Ascending aorta (tissue), 2 donors: ENCODE measurements at regions of chr6 and their contacts with region 1.

Region 1: GRCh38 chr6:20056350-20056992 is 155.8 kb downstream of the MBOAT1 start:
- DNase-seq: no peak
- H3K4me3 ChIP-seq: no peak overlapping the region
- H3K27ac ChIP-seq: no peak overlapping the region
- H3K4me1 ChIP-seq: no peaks in the 10 kb centered on the region
- H3K27me3 ChIP-seq: no peaks in the 10 kb centered on the region
- CTCF ChIP-seq: peak in 2 of 3 experiments; percentile 43 to 54

Region 2: GRCh38 chr6:18527836-18528743 is 1528.4 kb before region 1 on chr6:
- intact Hi-C with region 1: loop called (anchors 10 kb)
- DNase-seq: no peak
- H3K4me3 ChIP-seq: no peak overlapping the region
- H3K27ac ChIP-seq: no peak overlapping the region
- H3K4me1 ChIP-seq: no peaks in the 10 kb centered on the region
- H3K27me3 ChIP-seq: no peaks in the 10 kb centered on the region
- CTCF ChIP-seq: peak in 2 of 3 experiments; percentile 6 to 47

Region 3: DNA sequence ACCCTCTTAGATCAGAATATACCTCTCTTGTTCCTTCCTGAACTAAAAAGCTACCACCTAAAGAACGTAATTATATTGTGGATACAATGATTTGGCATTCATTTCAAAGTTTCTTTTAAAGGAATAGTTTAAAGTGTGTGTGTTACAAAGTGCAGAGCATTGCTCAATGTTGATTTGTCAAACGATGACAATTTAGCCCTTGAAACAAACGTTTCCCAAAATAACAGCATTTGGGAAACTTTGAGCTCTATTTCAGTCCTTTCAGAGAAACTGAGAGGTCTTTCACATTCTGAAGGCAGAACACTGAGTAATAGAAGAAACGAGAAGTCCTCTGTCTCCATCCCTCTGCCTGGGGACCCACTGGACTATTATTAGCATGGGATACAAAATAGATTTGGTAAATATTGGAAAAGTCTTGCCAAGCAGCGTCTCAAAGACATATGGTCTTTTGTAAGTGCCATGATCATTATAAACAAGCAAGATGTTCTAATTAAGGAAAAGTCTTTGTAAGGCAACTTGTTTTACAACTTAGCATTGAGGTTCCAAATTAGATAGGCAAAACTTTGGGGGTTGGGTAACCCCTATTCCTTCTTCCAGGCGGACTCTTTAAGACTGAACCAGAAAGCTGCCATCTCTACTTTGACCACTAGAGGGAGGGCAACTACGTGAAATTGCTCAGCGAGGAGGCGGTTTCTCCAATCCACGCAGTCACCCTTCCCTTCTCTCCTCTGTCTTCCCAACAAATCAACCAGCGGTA is 1460.5 kb before region 1 on chr6:
- intact Hi-C with region 1: loop called (anchors 2 kb)
- DNase-seq: peak in 1 of 2 donors; percentile 79
- H3K4me3 ChIP-seq: peak overlapping the region in 1 of 2 donors; percentile 51
- H3K27ac ChIP-seq: peak overlapping the region; percentile 56 to 65
- H3K4me1 ChIP-seq: no peaks in the 10 kb centered on the region
- H3K27me3 ChIP-seq: no peaks in the 10 kb centered on the region
- CTCF ChIP-seq: peak; percentile 72 to 93 (median 89)

Region 4: DNA sequence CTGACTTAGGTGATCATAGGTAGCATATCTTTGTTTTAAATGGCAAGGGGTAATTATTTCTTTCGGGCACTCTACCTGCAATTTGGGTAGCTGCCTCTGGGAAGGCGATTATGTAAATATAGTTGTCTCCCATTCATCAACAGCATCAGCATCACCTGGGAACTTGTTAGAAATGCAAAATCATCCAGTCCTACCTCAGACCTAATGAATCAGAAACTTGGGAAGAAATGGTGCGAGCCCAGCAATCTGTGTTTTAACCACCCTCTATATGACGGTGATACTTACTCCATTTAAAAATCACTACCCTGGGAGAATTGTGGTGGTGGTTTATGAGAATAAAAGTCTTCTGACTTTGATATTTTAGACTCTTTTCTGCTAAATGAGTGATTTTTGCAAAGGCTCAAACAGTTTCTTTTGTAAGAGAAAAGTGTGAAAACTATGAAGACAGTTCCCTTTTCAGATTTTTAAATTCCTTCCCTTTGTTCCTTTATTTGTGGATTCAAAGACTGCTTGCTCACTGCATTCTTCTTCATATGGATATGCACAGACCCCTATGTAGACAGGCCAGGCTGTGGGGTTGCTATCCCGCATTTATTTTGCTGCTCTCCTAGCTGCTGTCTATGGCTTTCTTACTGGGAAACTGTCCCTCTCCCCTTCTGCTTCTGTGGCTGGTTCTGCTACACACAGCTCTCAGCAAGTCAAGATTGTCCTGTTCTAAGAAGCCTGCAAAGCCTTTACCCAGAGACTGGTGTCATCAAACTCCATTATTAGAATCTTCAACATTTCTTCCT is 1304.0 kb before region 1 on chr6:
- intact Hi-C with region 1: loop called (anchors 2 kb)
- DNase-seq: no peak
- H3K4me3 ChIP-seq: no peak overlapping the region
- H3K27ac ChIP-seq: no peak overlapping the region
- H3K4me1 ChIP-seq: peaks cover 0 to 3% of the 10 kb centered on the region in 2 donors
- H3K27me3 ChIP-seq: no peaks in the 10 kb centered on the region
- CTCF ChIP-seq: no peak

Region 5: DNA sequence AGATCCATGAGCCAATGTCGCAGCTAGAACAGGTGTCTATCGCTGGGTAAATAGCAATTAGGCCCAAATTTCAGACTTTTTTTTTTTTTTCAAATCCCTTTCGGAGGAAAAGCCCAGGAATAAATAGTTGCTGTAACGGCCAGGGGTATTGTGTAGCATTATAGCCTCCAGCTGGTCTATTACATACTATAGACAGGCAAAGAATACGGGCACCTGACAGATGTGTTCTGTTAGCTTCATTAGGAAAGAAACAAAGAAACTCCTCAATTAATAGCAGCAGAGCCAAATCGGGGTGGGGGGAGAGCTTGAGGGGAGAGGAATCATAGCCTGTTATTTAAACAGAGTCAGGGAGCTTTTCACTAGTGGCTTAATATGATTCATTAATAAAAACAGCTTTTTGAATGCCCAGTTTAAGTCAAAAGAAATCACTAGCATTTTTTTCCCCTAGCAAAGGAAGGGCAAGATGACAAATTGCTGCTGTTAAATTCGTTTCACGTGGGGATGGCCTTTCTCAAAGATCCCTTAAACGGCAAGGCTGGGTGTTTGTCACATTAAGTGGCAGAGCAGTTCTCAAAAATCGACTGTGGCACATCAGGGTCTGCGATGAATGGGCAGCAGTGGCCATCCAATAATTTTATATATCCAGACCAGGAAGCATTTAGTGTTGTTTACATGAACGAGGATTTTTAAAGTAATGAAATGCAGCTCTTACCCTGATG is 79.9 kb before region 1 on chr6:
- intact Hi-C with region 1: no loop called
- DNase-seq: no peak
- H3K4me3 ChIP-seq: no peak overlapping the region
- H3K27ac ChIP-seq: no peak overlapping the region
- H3K4me1 ChIP-seq: no peaks in the 10 kb centered on the region
- H3K27me3 ChIP-seq: no peaks in the 10 kb centered on the region
- CTCF ChIP-seq: no peak

Region 6: GRCh38 chr6:20013066-20013861 is 43.2 kb before region 1 on chr6:
- intact Hi-C with region 1: no loop called
- DNase-seq: no peak
- H3K4me3 ChIP-seq: no peak overlapping the region
- H3K27ac ChIP-seq: no peak overlapping the region
- H3K4me1 ChIP-seq: no peaks in the 10 kb centered on the region
- H3K27me3 ChIP-seq: no peaks in the 10 kb centered on the region
- CTCF ChIP-seq: no peak